CD14-positive monocyte (primary cell): ENCODE measurements at regions of chr7 and their contacts with region 1.

Region 1: GRCh38 chr7:55255496-55256435 is 109.4 kb upstream of the LANCL2 start:
- DNase-seq: peak in 2 of 3 donors; percentile 3 to 22
- H3K4me3 ChIP-seq: peak overlapping the region in 1 of 3 experiments; percentile 62
- H3K4me3 Mint-ChIP-seq: peak overlapping the region; percentile 78 to 86
- H3K27ac ChIP-seq: no peak overlapping the region
- H3K27ac Mint-ChIP-seq: no peak overlapping the region
- H3K4me1 ChIP-seq: peaks cover 0 to 15% of the 10 kb centered on the region in 2 donors
- H3K4me1 Mint-ChIP-seq: peaks cover 9% of the 10 kb centered on the region
- H3K27me3 ChIP-seq: peaks cover 23 to 44% of the 10 kb centered on the region in 2 donors
- H3K27me3 Mint-ChIP-seq: peaks cover 35 to 55% (median 39%) of the 10 kb centered on the region in 3 donors
- CTCF ChIP-seq: peak; percentile 49

Region 2: GRCh38 chr7:54773472-54774399 is 482.0 kb before region 1 on chr7:
- intact Hi-C with region 1: loop called in 1 of 2 experiments (anchors 10 kb)
- DNase-seq: peak; percentile 25 to 57 (median 50)
- H3K4me3 ChIP-seq: peak overlapping the region in 2 of 3 experiments; percentile 1 to 36
- H3K4me3 Mint-ChIP-seq: peak overlapping the region; percentile 68 to 82
- H3K27ac ChIP-seq: no peak overlapping the region
- H3K27ac Mint-ChIP-seq: peak overlapping the region in 1 of 7 donors; percentile 27
- H3K4me1 ChIP-seq: no peaks in the 10 kb centered on the region
- H3K4me1 Mint-ChIP-seq: peaks cover 11% of the 10 kb centered on the region
- H3K27me3 ChIP-seq: peaks cover 6 to 10% of the 10 kb centered on the region in 2 donors
- H3K27me3 Mint-ChIP-seq: peaks cover 12 to 18% (median 16%) of the 10 kb centered on the region in 3 donors
- CTCF ChIP-seq: peak; percentile 87

Region 3: GRCh38 chr7:54781134-54781912 is 474.4 kb before region 1 on chr7:
- intact Hi-C with region 1: loop called (anchors 5 to 10 kb)
- DNase-seq: no peak
- H3K4me3 ChIP-seq: no peak overlapping the region
- H3K4me3 Mint-ChIP-seq: no peak overlapping the region
- H3K27ac ChIP-seq: no peak overlapping the region
- H3K27ac Mint-ChIP-seq: no peak overlapping the region
- H3K4me1 ChIP-seq: no peaks in the 10 kb centered on the region
- H3K4me1 Mint-ChIP-seq: no peaks in the 10 kb centered on the region
- H3K27me3 ChIP-seq: no peaks in the 10 kb centered on the region
- H3K27me3 Mint-ChIP-seq: peaks cover 0 to 6% (median 0%) of the 10 kb centered on the region in 3 donors
- CTCF ChIP-seq: no peak